Activated naive CD4-positive, alpha-beta T cell treated with anti-CD3 and anti-CD28 coated beads for 36 hours (primary cell): ENCODE measurements at regions of chr9 and their contacts with region 1.

Region 1: GRCh38 chr9:123349691-123350480 is 6.1 kb upstream of the CRB2 start:
- DNase-seq: peak; percentile 77
- H3K4me3 Mint-ChIP-seq: no peak overlapping the region
- H3K27ac Mint-ChIP-seq: no peak overlapping the region
- H3K4me1 Mint-ChIP-seq: peaks cover 3% of the 10 kb centered on the region
- H3K27me3 Mint-ChIP-seq: peaks cover 10% of the 10 kb centered on the region

Region 2: DNA sequence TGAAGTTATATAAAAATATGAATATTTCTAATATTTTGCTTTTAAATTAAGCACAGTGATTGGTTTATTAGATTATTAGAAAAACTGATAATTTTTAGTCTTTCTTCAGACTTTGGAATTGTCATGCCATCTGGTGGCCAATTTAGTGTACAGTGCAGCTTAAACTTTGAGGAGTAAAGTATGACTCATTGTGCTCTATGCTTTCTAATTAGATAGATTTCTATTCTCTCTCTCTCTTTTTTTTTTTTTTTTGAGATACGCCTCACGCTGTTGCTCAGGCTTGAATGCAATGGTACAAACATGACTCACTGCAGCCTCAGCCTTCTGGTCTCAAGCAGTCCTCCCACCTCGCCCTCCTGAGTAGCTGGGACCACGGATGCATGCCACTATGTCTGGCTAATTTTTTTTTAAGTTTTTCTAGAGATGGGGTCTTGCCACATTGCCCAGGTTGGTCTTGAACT is 358.5 kb before region 1 on chr9:
- CTCF ChIA-PET with region 1: interaction called, 4 read pairs
- intact Hi-C with region 1: loop called (anchors 1 kb)
- DNase-seq: peak; percentile 49
- H3K4me3 Mint-ChIP-seq: no peak overlapping the region
- H3K27ac Mint-ChIP-seq: no peak overlapping the region
- H3K4me1 Mint-ChIP-seq: peaks cover 7% of the 10 kb centered on the region
- H3K27me3 Mint-ChIP-seq: no peaks in the 10 kb centered on the region

Region 3: DNA sequence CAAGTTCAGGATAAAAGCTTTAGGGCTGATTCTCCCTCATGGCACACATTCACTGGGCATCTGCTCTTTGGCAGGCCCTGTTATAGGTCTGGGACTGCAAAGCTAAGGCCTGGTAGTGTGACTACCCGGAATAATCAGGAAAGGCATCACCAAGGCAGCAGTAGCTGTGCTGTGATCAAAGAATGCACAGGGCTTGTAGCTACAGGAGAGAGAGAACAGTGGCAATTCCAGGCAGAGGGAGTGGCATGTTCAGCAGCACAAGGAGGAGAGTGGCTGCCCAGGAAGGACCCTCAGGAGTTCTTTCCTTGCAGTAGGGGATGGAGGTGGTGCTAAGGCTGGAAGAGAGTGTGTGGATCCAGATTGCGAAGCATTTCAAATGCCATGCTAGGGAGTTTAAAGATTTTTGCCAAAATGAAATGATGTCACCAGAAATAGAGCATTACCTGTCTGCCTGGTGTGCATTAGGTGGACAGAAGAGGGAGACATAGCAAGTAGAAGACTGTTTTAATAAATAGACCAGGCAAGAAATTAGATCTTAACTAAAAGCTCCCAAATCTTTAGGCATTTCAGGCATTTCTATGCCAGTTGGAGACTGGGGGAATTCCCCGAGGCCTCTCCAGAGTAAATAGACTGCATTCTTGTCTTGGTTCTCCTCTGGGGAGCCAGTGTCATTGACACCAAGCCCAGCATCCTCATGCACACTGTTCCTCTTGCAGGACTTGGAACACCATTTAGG is 247.3 kb before region 1 on chr9:
- CTCF ChIA-PET with region 1: interaction called, 28 read pairs
- intact Hi-C with region 1: loop called (anchors 1 kb)
- DNase-seq: no peak
- H3K4me3 Mint-ChIP-seq: no peak overlapping the region
- H3K27ac Mint-ChIP-seq: no peak overlapping the region
- H3K4me1 Mint-ChIP-seq: no peaks in the 10 kb centered on the region
- H3K27me3 Mint-ChIP-seq: no peaks in the 10 kb centered on the region

Region 4: DNA sequence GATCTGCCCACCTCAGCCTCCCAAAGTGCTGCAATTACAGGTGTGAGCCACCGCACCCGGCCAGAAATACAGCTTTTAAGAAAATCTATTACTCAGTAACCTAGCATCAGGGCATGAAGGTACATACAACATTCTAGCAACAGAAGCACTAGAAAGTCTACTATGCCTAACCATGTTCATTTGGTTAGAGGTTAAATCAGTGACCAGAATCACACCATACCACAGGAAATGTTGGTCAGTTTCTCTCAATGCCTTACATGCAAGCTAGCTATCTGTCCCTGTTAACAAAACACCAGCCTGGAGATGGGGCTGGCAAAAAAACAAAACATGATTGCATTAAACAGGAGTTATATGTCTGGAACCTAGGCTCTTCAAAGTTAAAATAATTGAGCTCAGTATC is 185.6 kb before region 1 on chr9:
- CTCF ChIA-PET with region 1: no interaction called
- intact Hi-C with region 1: no loop called
- DNase-seq: no peak
- H3K4me3 Mint-ChIP-seq: no peak overlapping the region
- H3K27ac Mint-ChIP-seq: no peak overlapping the region
- H3K4me1 Mint-ChIP-seq: peaks cover 3% of the 10 kb centered on the region
- H3K27me3 Mint-ChIP-seq: no peaks in the 10 kb centered on the region

Region 5: GRCh38 chr9:123338710-123339665 is 10.9 kb before region 1 on chr9:
- CTCF ChIA-PET with region 1: interaction called, 19 read pairs
- intact Hi-C with region 1: no loop called
- DNase-seq: peak; percentile 82
- H3K4me3 Mint-ChIP-seq: peak overlapping the region; percentile 77
- H3K27ac Mint-ChIP-seq: peak overlapping the region; percentile 97
- H3K4me1 Mint-ChIP-seq: peaks cover 35% of the 10 kb centered on the region
- H3K27me3 Mint-ChIP-seq: no peaks in the 10 kb centered on the region

Region 6: DNA sequence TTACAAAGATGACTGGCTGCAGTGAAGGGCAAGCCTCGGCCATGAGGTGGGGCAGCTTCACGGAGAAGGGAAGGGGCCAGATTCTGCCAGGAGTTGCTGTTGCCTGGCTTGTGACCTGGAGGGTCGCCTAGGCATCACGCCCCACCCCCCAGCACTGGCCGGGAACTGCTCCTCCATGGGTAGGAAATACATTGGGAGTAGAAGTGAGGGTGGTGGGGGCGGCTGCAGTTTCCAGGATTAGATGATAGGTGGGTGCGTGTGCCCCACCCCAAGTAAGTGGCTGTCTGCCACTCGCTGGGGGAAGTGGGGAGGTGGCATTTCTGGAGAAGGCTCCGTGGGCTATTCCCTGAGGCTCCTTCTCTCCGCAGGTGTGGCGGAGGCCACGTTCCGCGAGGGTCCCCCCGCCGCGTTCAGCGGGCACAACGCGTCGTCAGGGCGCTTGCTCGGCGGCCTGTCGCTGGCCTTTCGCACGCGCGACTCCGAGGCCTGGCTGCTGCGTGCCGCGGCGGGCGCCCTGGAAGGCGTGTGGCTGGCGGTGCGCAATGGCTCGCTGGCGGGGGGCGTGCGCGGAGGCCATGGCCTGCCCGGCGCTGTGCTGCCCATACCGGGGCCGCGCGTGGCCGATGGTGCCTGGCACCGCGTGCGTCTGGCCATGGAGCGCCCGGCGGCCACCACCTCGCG is 23.0 kb after region 1 on chr9:
- CTCF ChIA-PET with region 1: no interaction called
- intact Hi-C with region 1: no loop called
- DNase-seq: no peak
- H3K4me3 Mint-ChIP-seq: no peak overlapping the region
- H3K27ac Mint-ChIP-seq: no peak overlapping the region
- H3K4me1 Mint-ChIP-seq: peaks cover 8% of the 10 kb centered on the region
- H3K27me3 Mint-ChIP-seq: peaks cover 43% of the 10 kb centered on the region

Region 7: DNA sequence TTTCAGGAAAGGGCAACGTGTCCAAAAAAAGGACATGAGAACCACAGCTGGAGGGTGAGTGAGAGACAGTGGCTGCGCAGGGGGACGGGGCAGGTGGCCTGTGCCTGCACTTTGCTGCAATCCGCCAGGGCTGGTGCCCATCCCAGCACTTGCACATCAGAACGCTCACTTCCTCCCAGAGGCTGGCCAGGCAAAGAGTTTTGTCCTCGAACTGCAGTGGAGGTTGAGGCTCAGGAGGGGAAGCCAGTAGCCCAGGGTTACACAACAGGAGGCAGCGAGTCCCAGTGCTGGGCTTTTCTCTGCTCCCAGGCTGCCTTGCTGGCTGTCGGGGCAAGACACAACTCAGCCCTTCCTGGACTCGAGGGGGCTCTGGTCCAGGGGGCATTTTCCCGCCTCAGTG is 39.2 kb after region 1 on chr9:
- CTCF ChIA-PET with region 1: interaction called, 25 read pairs
- intact Hi-C with region 1: loop called (anchors 1 kb)
- DNase-seq: no peak
- H3K4me3 Mint-ChIP-seq: no peak overlapping the region
- H3K27ac Mint-ChIP-seq: no peak overlapping the region
- H3K4me1 Mint-ChIP-seq: no peaks in the 10 kb centered on the region
- H3K27me3 Mint-ChIP-seq: no peaks in the 10 kb centered on the region

Region 8: GRCh38 chr9:123495731-123496130 is 145.8 kb after region 1 on chr9:
- CTCF ChIA-PET with region 1: no interaction called
- intact Hi-C with region 1: no loop called
- DNase-seq: no peak
- H3K4me3 Mint-ChIP-seq: no peak overlapping the region
- H3K27ac Mint-ChIP-seq: no peak overlapping the region
- H3K4me1 Mint-ChIP-seq: no peaks in the 10 kb centered on the region
- H3K27me3 Mint-ChIP-seq: no peaks in the 10 kb centered on the region